ENCODE measurements at regions of chr6 and their contacts with region 1.

Region 1: DNA sequence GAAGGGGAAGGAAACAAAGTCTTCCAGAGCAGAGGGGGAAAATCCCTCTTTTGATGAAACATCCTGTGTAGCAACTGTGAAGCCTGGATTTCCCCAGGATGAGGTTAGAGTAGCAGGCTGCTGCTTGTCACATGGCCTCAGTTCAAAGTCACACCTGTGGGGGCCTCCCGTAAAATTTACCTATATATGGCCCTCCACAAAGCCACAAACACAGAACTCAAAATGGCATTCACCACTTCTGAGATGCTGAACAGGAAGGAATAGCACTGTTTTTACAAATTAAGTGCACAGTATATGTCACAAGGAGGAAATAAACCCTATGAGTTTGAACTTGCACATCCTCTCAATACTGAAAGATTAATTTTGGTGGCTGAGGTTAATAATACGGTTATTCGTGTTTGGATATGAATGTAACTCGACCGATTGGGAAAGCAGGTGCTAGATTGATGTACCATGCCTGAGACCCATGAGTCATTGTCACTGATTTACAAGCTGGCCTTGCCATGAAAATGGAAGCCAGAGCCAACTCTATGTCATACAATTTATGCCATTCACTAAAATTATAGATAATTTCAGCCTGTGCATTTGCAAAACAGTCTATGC is 70.6 kb downstream of the SGK1 start:
- DNase-seq: peak; percentile 29 to 95 (median 84)
- ATAC-seq: peak; percentile 95 to 96
- H3K4me3 Mint-ChIP-seq: peak overlapping the region; percentile 40 to 86 (median 78)
- H3K27ac Mint-ChIP-seq: peak overlapping the region; percentile 79 to 98 (median 96)
- H3K4me1 Mint-ChIP-seq: peaks cover 25 to 69% (median 63%) of the 10 kb centered on the region in 4 donors
- H3K27me3 Mint-ChIP-seq: no peaks in the 10 kb centered on the region

Region 2: DNA sequence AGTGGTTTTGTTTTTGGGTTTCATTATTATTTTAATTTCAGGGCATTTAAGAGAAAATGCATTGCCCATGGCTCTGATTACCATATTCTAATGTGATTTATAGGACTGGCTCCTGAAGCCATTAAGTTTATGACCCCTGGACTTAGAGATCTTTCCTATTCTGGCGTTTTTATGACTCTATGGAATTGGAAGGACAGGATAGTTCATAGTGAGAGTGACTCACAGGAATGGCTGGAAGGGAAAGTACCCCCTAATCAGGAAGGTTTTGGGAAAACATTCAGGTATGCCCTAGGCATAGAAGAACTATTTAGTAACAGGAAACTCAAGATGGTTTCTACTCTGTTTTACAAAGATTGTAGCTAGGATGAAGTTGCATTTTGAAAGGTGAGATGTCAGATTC is 86.3 kb before region 1 on chr6:
- POLR2A ChIA-PET with region 1: no interaction called
- DNase-seq: no peak
- ATAC-seq: no peak
- H3K4me3 Mint-ChIP-seq: no peak overlapping the region
- H3K27ac Mint-ChIP-seq: no peak overlapping the region
- H3K4me1 Mint-ChIP-seq: no peaks in the 10 kb centered on the region
- H3K27me3 Mint-ChIP-seq: no peaks in the 10 kb centered on the region

Region 3: GRCh38 chr6:134272374-134272773 is 25.0 kb after region 1 on chr6:
- POLR2A ChIA-PET with region 1: interaction called, 11 read pairs
- DNase-seq: peak in 3 of 10 donors; percentile 16 to 40 (median 25)
- ATAC-seq: peak; percentile 35 to 53
- H3K4me3 Mint-ChIP-seq: peak overlapping the region; percentile 1 to 76 (median 64)
- H3K27ac Mint-ChIP-seq: peak overlapping the region; percentile 42 to 91 (median 82)
- H3K4me1 Mint-ChIP-seq: peaks cover 22 to 46% (median 36%) of the 10 kb centered on the region in 4 donors
- H3K27me3 Mint-ChIP-seq: no peaks in the 10 kb centered on the region

Region 4: GRCh38 chr6:134345772-134346171 is 98.4 kb after region 1 on chr6:
- POLR2A ChIA-PET with region 1: no interaction called
- DNase-seq: no peak
- ATAC-seq: no peak
- H3K4me3 Mint-ChIP-seq: no peak overlapping the region
- H3K27ac Mint-ChIP-seq: peak overlapping the region in 1 of 10 donors; percentile 3
- H3K4me1 Mint-ChIP-seq: peaks cover 7 to 13% (median 12%) of the 10 kb centered on the region in 4 donors
- H3K27me3 Mint-ChIP-seq: no peaks in the 10 kb centered on the region

Measured in naive thymus-derived CD8-positive, alpha-beta T cell (primary cell).